CD14-positive monocyte (primary cell): ENCODE measurements at regions of chr4 and their contacts with region 1.

Region 1: DNA sequence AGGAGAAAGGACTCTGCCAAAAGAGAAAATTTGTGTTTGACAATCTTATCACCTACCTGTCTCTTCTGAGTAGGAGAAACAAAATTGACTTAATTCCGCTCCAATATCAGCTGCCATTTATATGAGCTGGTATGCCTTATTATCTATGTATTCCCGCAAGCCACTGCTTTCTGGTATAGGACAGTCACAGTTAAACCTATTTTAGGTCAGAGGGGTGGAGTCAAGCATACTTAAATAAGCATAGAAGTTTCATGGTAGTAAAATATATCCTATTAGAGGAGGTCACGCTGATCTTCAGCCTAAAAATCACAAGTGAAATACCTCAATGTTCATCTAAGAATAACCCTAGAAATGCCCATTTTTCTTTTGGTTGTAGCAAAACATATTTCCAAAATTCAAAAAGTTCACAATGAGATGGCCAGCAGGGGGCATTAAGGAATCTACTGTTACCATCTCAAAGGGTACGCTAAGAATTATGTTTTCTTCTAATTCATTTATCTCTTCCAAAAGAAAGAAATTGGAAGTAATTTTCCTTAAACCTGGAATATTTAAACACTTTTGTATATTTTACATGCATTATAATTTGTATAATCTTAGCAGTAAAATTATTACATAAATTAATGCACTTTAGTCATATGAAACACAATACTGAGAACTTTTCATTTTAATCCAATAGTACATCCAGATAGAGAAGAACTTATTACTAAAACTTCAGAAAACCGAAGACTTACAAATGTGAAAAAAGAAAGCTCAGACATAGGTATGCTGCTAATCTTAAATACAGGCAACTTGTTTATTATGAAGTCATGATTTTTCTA is 10.5 kb downstream of the PPAT start:
- DNase-seq: peak; percentile 22 to 55 (median 33)
- H3K4me3 ChIP-seq: no peak overlapping the region
- H3K4me3 Mint-ChIP-seq: no peak overlapping the region
- H3K27ac ChIP-seq: no peak overlapping the region
- H3K27ac Mint-ChIP-seq: no peak overlapping the region
- H3K4me1 ChIP-seq: no peaks in the 10 kb centered on the region
- H3K4me1 Mint-ChIP-seq: peaks cover 7% of the 10 kb centered on the region
- H3K27me3 ChIP-seq: no peaks in the 10 kb centered on the region
- H3K27me3 Mint-ChIP-seq: no peaks in the 10 kb centered on the region
- CTCF ChIP-seq: peak; percentile 85

Region 2: GRCh38 chr4:56828784-56829535 is 404.1 kb after region 1 on chr4:
- intact Hi-C with region 1: loop called in 1 of 2 experiments (anchors 10 kb)
- DNase-seq: no peak
- H3K4me3 ChIP-seq: no peak overlapping the region
- H3K4me3 Mint-ChIP-seq: no peak overlapping the region
- H3K27ac ChIP-seq: no peak overlapping the region
- H3K27ac Mint-ChIP-seq: no peak overlapping the region
- H3K4me1 ChIP-seq: peaks cover 8 to 19% of the 10 kb centered on the region in 2 donors
- H3K4me1 Mint-ChIP-seq: peaks cover 25% of the 10 kb centered on the region
- H3K27me3 ChIP-seq: no peaks in the 10 kb centered on the region
- H3K27me3 Mint-ChIP-seq: peaks cover 0 to 2% (median 0%) of the 10 kb centered on the region in 3 donors
- CTCF ChIP-seq: no peak

Region 3: DNA sequence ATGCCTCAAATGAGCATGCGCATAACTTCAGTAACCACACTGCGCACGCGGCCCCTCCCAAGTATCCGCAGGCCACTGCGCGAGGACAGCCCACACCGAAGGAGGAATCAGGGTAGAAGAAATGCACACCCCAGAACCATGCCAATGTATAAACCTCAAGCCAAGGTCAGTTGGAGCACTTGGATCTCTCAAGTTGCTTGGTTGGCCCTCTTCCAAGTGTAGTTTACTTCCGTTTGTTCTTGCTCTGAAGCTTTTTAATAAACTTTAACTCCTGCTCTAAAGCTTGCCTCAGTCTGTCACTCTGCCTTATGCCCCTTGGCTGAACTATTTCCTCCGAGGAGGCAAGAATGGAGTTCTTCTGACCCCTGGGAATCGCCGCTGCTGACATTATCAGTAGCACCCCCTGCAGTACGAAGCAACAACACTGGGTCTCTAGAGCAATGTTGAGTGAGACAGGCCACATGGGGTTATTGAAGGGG is 418.6 kb after region 1 on chr4:
- intact Hi-C with region 1: loop called (anchors 5 to 10 kb)
- DNase-seq: no peak
- H3K4me3 ChIP-seq: no peak overlapping the region
- H3K4me3 Mint-ChIP-seq: no peak overlapping the region
- H3K27ac ChIP-seq: no peak overlapping the region
- H3K27ac Mint-ChIP-seq: no peak overlapping the region
- H3K4me1 ChIP-seq: no peaks in the 10 kb centered on the region
- H3K4me1 Mint-ChIP-seq: peaks cover 13% of the 10 kb centered on the region
- H3K27me3 ChIP-seq: no peaks in the 10 kb centered on the region
- H3K27me3 Mint-ChIP-seq: peaks cover 0 to 3% (median 2%) of the 10 kb centered on the region in 3 donors
- CTCF ChIP-seq: no peak